ENCODE measurements at regions of chr3 and their contacts with region 1.

Region 1: DNA sequence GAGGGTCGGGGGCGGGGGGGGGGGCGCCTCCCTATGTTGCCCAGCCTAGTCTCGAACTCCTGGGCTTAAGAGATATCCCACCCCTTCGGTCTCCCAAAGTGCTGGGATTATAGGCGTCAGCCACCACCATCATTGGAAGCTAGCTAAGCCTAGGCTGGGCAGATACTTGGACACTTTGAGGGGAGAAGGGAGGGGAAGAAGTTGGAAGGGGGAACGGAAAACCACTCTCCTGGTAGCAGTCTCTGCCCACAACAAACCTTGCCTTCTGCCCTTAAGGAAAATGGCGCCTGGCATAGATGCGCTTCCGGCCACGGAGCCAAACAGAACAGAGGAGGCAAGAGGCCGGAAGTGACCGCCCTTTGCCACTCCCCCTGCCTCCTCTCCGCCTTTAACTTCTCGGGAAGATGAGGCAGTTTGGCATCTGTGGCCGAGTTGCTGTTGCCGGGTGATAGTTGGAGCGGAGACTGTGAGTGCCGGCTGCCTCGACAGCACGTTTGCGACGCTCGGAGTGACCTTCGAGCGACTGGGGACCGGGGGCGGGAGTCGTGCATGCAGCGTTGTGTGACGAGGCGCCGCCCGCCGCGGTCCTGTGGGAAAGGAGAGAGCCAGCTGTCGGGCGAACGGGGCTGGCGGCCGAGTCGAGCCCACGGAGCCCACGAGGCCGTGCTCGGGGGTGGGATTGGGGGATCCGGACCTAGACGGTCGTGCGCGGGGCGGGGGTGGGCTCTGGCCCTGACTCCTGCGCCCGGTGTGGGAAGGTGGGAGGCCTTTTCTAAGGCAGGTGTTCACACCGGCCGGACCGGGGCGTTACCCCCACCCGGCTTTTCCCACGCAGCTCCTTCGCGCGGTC is at the start of gene MFN1:
- DNase-seq: peak; percentile 94 to 97 (median 95)
- H3K4me3 ChIP-seq: peak within 1 kb of the TSS; percentile 84 to 99 (median 94)
- H3K27ac ChIP-seq: peak within 1 kb of the TSS; percentile 33 to 78
- H3K4me1 ChIP-seq: peaks cover 2 to 13% (median 9%) of the 10 kb centered on the region in 4 experiments
- H3K27me3 ChIP-seq: no peaks in the 10 kb centered on the region

Region 2: GRCh38 chr3:179363332-179363731 is 15.8 kb after region 1 on chr3:
- CTCF ChIA-PET with region 1: interaction called, 13 read pairs
- POLR2A ChIA-PET with region 1: no interaction called
- DNase-seq: no peak
- H3K4me3 ChIP-seq: no peak overlapping the region
- H3K27ac ChIP-seq: no peak overlapping the region
- H3K4me1 ChIP-seq: no peaks in the 10 kb centered on the region
- H3K27me3 ChIP-seq: no peaks in the 10 kb centered on the region